ENCODE measurements at regions of chr9 and their contacts with region 1.

Region 1: GRCh38 chr9:34001298-34001697 is 47.4 kb downstream of the UBAP2 start:
- DNase-seq: no peak
- H3K4me3 ChIP-seq: no peak overlapping the region
- CTCF ChIP-seq: no peak

Region 2: DNA sequence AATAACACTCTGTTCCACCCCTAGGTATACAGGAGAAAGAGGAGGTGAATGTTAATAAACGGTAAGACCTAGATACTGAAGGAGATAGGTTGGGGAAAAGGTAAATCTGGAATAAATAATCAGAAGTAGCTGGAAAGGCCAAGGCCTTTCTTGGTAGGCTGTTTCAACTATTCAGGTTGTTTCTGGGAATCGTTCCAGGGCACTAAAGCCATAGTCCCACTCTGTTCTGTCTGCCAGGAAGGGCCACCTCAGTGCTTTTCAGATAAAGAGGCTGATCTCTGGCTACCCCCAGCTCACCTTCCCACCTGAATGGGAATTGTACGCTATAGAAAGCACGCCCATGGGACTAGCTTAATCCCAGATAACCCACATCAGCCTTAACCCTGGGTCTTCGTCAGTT is 92.3 kb after region 1 on chr9:
- in situ Hi-C with region 1: loop called (anchors 5 kb)
- DNase-seq: no peak
- H3K4me3 ChIP-seq: no peak overlapping the region
- CTCF ChIP-seq: no peak

Region 3: DNA sequence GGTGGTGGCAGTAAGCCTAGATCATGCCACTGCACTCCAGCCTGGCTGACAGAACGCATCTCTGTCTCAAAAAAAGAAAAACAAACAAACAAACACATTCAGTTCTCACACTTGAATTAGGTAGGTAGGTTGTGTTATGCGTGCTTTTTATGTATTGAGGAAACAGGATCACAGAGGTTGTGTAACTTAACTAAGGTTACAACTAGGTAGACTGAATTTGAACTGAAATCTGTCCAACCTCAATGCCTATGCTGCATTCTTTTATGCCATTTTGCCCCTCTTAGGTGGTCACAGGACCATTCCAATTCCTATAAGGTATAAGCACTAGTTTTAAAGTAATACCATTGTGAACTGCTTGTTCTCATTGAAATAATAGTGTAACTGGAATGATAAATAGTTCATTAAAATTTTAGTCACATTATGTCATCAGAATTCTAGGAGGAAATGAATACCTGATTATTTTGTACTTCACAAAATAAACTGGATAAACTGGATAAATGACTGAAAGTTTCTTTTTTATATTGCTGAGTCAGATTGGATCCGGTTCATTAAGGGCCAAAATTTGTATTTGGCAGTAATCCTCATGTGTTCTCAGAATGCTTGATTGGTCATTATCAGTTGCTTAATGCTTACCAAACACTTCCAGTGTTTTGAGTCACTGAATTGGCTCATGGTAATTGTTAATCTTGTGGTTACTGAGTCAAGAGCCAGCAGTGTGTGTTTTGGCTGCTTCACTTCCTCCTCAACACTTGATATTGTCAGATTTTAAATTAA is 184.7 kb after region 1 on chr9:
- in situ Hi-C with region 1: no loop called
- DNase-seq: peak; percentile 97
- H3K4me3 ChIP-seq: no peak overlapping the region
- CTCF ChIP-seq: no peak